HepG2 (cell line): ENCODE measurements at regions of chr6 and their contacts with region 1.

Region 1: DNA sequence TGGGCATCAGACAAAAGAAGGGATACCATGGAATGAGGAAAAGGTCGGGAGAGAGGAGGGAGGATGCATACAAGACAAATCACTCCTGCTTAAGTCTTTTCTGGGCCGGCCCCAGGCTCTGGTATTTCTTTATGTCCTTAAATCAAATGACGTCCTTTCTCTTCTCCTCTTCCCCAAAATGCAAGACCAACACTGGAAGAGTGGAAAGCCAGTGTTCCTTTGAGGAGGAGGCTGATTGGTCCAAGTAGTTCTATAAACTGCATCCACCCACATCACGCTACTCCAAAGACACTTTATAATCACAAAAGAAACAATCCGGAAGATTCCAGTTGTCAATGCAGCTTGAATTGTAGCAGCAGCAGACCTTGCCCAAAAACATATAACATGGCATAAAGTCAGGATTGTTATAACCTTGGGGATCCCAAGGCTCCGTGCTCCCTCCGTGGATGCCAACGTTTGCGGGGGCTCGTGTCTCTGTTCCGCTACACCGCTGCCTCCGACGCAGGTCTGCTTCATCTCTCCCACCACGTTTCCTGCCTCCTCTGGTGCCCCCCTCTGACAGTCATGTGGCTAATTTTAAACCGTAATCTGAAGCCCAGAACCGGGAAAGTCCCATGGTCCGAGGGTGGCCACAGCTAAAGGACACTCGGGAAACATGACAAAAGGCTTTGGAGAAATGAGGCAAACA is 47.1 kb downstream of the MCUR1 start:
- DNase-seq: no peak
- ATAC-seq: peak; percentile 70
- H3K4me3 ChIP-seq: no peak overlapping the region
- H3K27ac ChIP-seq: no peak overlapping the region
- H3K4me1 ChIP-seq: 0 out of 2 replicates have a peak, but pooled peaks cover 7% of the 10 kb centered on the region
- H3K27me3 ChIP-seq: peaks cover 0 to 4% of the 10 kb centered on the region in 2 experiments; a peak in 1 of 5 replicates
- CTCF ChIP-seq: peak; percentile 79
- EP300 ChIP-seq: no peak
- POLR2A ChIP-seq: no peak
- RAD21 ChIP-seq: no peak

Region 2: GRCh38 chr6:13561624-13562267 is 205.5 kb before region 1 on chr6:
- CTCF ChIA-PET with region 1: no interaction called
- POLR2A ChIA-PET with region 1: no interaction called
- in situ Hi-C with region 1: no loop called
- intact Hi-C with region 1: loop called (anchors 1 kb)
- DNase-seq: peak; percentile 80
- ATAC-seq: peak; percentile 78
- H3K4me3 ChIP-seq: peak overlapping the region in 2 of 3 experiments; percentile 15 to 17; a peak in 3 of 6 replicates
- H3K27ac ChIP-seq: peak overlapping the region; percentile 64
- H3K4me1 ChIP-seq: peaks cover 53% of the 10 kb centered on the region
- H3K27me3 ChIP-seq: no peaks in the 10 kb centered on the region; a peak in 1 of 5 replicates
- CTCF ChIP-seq: no peak
- EP300 ChIP-seq: peak in 1 of 2 experiments; percentile 75; a peak in 1 of 4 replicates
- POLR2A ChIP-seq: no peak
- RAD21 ChIP-seq: no peak

Region 3: GRCh38 chr6:13624871-13625288 is 142.4 kb before region 1 on chr6:
- CTCF ChIA-PET with region 1: no interaction called
- POLR2A ChIA-PET with region 1: no interaction called
- in situ Hi-C with region 1: no loop called
- intact Hi-C with region 1: loop called (anchors 1 kb)
- DNase-seq: peak; percentile 65
- ATAC-seq: peak; percentile 90
- H3K4me3 ChIP-seq: no peak overlapping the region
- H3K27ac ChIP-seq: no peak overlapping the region
- H3K4me1 ChIP-seq: peaks cover 5% of the 10 kb centered on the region; the same call in 1 of the 2 replicates
- H3K27me3 ChIP-seq: no peaks in the 10 kb centered on the region
- CTCF ChIP-seq: peak; percentile 74
- EP300 ChIP-seq: no peak
- POLR2A ChIP-seq: no peak
- RAD21 ChIP-seq: no peak; the same call in 1 of the 2 replicates

Region 4: DNA sequence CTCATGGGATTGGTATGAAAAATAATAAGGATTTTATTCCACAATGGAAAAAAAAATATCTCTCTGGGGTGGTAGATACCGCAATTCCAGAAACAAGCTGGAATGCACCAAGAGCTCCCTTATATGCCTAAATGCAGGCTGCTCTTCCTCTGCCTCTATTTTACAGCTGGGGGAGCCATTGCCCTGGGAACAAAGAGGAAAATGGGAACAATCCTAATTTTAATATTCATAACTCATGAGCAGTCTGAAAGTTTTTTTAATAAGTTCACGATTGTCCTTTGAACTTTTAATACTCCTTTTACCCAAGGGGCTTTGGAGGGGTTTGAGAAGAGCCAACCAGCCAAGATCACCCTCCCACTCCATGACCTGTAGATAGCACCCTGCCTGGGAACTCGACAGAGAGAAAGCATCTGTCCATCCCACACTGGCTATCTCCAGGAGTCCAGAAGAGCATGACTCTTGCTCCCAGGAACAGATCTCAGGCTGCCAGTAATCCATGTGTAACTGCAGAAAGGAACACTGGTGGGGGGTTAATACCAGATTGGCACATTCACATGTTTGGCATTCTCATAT is 425.0 kb after region 1 on chr6:
- CTCF ChIA-PET with region 1: no interaction called
- POLR2A ChIA-PET with region 1: no interaction called
- in situ Hi-C with region 1: no loop called
- intact Hi-C with region 1: no loop called
- DNase-seq: no peak
- ATAC-seq: no peak
- H3K4me3 ChIP-seq: no peak overlapping the region
- H3K27ac ChIP-seq: no peak overlapping the region
- H3K4me1 ChIP-seq: no peaks in the 10 kb centered on the region
- H3K27me3 ChIP-seq: peaks cover 0 to 19% of the 10 kb centered on the region in 2 experiments; a peak in 1 of 5 replicates
- CTCF ChIP-seq: no peak
- EP300 ChIP-seq: no peak
- POLR2A ChIP-seq: no peak
- RAD21 ChIP-seq: no peak